Common myeloid progenitor, CD34-positive (primary cell): ENCODE measurements at regions of chr11 and their contacts with region 1.

Region 1: DNA sequence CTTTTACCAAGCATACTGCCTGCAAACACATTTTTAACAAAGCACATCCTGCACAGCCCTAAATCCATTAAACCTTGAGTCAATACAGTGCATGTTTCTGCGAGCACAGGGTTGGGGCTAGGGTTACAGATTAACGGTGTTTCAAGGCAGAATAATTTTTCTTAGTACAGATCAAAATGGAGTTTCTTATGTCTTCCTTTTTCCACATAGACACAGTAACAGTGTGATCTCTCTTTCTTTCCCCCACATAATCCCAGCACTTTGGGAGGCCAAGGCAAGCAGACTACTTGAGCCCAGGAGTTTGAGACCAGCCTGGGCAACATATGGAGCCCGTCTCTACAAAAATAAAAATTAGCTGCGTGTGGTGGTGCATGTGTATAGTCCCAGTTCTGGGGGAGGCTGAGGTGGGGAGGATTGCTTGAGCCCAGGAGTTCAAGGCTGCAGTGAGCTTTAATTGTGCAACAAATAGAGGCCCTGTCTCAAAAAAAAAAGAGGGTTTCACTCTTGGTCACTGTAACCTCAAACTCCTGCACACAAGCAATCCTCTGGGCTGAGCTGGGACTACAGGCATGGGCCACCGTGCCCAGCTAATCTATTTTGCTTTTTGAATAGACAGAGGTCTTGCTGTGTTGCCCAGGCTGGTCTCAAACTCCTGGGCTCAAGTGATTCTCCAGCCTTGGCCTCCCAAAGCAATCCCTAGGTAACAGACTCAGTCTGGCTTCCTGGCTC is 19.7 kb upstream of the SLC3A2 start:
- DNase-seq: no peak
- H3K4me3 ChIP-seq: no peak overlapping the region
- H3K27ac ChIP-seq: no peak overlapping the region
- H3K4me1 ChIP-seq: peaks cover 4 to 45% (median 16%) of the 10 kb centered on the region in 4 experiments
- H3K27me3 ChIP-seq: no peaks in the 10 kb centered on the region

Region 2: GRCh38 chr11:62875698-62876478 is 14.9 kb after region 1 on chr11:
- CTCF ChIA-PET with region 1: interaction called, 22 read pairs
- POLR2A ChIA-PET with region 1: interaction called, 5 read pairs
- DNase-seq: peak in 1 of 3 donors; percentile 32
- H3K4me3 ChIP-seq: no peak overlapping the region
- H3K27ac ChIP-seq: no peak overlapping the region
- H3K4me1 ChIP-seq: peaks cover 2 to 15% (median 12%) of the 10 kb centered on the region in 4 experiments
- H3K27me3 ChIP-seq: no peaks in the 10 kb centered on the region

Region 3: DNA sequence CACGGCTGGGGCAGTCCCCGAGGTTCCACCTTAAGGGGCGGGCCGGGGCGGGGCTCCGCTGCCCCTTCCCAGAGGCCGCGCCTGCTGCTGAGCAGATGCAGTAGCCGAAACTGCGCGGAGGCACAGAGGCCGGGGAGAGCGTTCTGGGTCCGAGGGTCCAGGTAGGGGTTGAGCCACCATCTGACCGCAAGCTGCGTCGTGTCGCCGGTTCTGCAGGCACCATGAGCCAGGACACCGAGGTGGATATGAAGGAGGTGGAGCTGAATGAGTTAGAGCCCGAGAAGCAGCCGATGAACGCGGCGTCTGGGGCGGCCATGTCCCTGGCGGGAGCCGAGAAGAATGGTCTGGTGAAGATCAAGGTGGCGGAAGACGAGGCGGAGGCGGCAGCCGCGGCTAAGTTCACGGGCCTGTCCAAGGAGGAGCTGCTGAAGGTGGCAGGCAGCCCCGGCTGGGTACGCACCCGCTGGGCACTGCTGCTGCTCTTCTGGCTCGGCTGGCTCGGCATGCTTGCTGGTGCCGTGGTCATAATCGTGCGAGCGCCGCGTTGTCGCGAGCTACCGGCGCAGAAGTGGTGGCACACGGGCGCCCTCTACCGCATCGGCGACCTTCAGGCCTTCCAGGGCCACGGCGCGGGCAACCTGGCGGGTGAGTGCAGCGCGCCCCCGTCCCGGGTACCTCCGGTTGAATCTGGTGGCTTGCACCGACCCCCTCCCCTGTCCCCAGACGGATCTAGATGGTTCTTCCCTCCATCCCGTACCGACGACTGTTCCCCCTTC is 20.0 kb after region 1 on chr11 and contains the start of gene SLC3A2:
- CTCF ChIA-PET with region 1: interaction called, 12 read pairs
- POLR2A ChIA-PET with region 1: interaction called, 5 read pairs
- DNase-seq: peak; percentile 87 to 94 (median 90)
- H3K4me3 ChIP-seq: peak within 1 kb of the TSS; percentile 86 to 100 (median 95)
- H3K27ac ChIP-seq: peak within 1 kb of the TSS; percentile 98 to 99
- H3K4me1 ChIP-seq: peaks cover 15 to 48% (median 32%) of the 10 kb centered on the region in 4 experiments
- H3K27me3 ChIP-seq: no peaks in the 10 kb centered on the region